ENCODE measurements at regions of chr9 and their contacts with region 1.

Region 1: GRCh38 chr9:15416880-15417279 is 5.8 kb upstream of the SNAPC3 start:
- DNase-seq: peak; percentile 59 to 82 (median 76)
- H3K4me3 ChIP-seq: no peak overlapping the region
- H3K27ac ChIP-seq: no peak overlapping the region
- H3K4me1 ChIP-seq: peaks cover 0 to 3% (median under 1%) of the 10 kb centered on the region in 4 experiments
- H3K27me3 ChIP-seq: no peaks in the 10 kb centered on the region

Region 2: DNA sequence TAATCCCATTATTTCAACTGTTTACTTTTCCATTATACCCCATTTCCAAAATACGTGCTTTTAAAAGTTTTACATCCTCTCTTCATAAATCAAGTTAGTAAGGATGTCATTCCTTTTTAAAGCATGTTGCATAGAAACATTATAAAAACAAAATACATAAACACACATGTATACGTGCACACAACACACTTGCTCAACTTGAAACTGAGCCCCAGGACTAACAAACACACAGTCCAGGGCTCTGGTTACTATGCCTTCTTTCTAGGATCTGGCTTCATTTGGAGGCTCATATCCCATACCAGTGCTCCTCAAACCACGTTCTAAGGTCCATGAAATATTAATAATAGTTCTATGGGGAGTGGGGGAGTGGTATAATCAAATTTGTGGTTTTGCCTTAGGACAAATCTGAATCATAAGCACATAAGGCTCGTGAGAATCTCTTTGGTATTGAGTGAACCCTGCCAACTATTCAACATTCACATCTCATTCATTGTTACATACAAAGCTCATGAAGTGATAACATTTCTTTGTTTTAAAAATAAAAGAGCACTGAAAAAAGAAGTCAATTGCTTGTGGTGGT is 1158.1 kb before region 1 on chr9:
- CTCF ChIA-PET with region 1: no interaction called
- POLR2A ChIA-PET with region 1: no interaction called
- DNase-seq: no peak
- H3K4me3 ChIP-seq: no peak overlapping the region
- H3K27ac ChIP-seq: no peak overlapping the region
- H3K4me1 ChIP-seq: no peaks in the 10 kb centered on the region
- H3K27me3 ChIP-seq: peaks cover 0 to 8% (median 0%) of the 10 kb centered on the region in 5 experiments

Region 3: GRCh38 chr9:15211160-15211814 is 205.6 kb before region 1 on chr9:
- CTCF ChIA-PET with region 1: interaction called, 85 read pairs
- POLR2A ChIA-PET with region 1: no interaction called
- DNase-seq: peak; percentile 76 to 87 (median 84)
- H3K4me3 ChIP-seq: no peak overlapping the region
- H3K27ac ChIP-seq: no peak overlapping the region
- H3K4me1 ChIP-seq: no peaks in the 10 kb centered on the region
- H3K27me3 ChIP-seq: no peaks in the 10 kb centered on the region

Region 4: DNA sequence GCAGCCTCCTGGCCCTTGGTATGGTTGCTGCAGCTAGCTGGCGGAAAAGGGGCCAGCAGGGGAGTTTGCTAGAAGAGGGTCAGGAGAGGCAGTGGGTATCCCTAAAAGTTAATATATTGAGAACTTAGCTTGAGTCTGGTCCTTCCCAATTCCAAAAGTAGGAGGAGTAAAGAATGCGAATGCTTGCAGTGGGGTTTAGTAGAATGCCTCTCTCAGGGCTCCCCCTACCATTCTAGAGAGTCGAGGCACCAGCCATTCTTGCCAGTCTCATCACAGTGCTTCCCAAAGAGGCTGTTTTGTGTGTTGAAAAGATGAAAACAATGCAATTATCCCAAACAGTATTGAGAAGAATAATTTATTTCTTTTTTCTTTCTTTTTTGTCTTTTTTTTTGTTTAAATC is 136.2 kb before region 1 on chr9:
- CTCF ChIA-PET with region 1: interaction called, 22 read pairs
- POLR2A ChIA-PET with region 1: no interaction called
- DNase-seq: no peak
- H3K4me3 ChIP-seq: no peak overlapping the region
- H3K27ac ChIP-seq: no peak overlapping the region
- H3K4me1 ChIP-seq: no peaks in the 10 kb centered on the region
- H3K27me3 ChIP-seq: no peaks in the 10 kb centered on the region

Region 5: DNA sequence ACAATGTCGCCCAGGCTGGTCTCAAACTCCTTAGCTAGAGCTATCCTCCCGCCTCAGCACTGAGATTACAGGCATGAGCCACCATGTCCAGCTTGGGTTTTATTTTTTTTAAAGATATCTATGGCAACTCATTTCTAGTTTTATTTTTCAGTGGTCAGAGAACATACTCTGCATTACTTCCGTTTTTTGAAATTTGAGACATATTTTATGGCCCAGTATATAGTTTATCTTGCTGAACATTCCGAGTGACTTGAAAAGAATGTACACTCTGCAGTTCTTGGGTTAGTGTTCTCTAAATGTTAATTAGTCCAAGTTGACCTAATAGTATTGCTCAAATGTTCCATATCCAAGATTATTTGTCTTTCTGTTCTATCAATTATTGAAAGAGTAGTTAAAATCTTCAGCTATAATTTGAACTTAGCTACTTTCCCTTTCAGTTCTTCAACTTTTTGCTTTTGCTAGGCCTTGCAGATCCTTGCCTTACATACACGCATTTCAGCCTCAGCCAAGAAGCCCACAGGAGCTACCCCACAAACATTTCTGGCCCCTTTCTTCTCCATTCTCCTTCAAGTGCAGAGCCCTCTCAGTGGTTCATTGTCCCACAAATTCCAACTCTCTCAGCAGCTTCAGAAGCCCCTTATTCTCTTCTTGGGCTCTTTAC is 16.5 kb before region 1 on chr9:
- CTCF ChIA-PET with region 1: interaction called, 10 read pairs
- POLR2A ChIA-PET with region 1: no interaction called
- DNase-seq: peak in 2 of 3 donors; percentile 39 to 55
- H3K4me3 ChIP-seq: no peak overlapping the region
- H3K27ac ChIP-seq: peak overlapping the region in 1 of 2 experiments; percentile 22
- H3K4me1 ChIP-seq: no peaks in the 10 kb centered on the region
- H3K27me3 ChIP-seq: no peaks in the 10 kb centered on the region

Measured in common myeloid progenitor, CD34-positive (primary cell).